Panc1 (cell line): ENCODE measurements at regions of chr3 and their contacts with region 1.

Region 1: GRCh38 chr3:153246806-153247205 is 84.8 kb downstream of the RAP2B start:
- DNase-seq: no peak
- ATAC-seq: no peak
- H3K4me3 ChIP-seq: no peak overlapping the region
- H3K27ac ChIP-seq: no peak overlapping the region
- H3K4me1 ChIP-seq: no peaks in the 10 kb centered on the region
- H3K27me3 ChIP-seq: no peaks in the 10 kb centered on the region
- CTCF ChIP-seq: no peak

Region 2: DNA sequence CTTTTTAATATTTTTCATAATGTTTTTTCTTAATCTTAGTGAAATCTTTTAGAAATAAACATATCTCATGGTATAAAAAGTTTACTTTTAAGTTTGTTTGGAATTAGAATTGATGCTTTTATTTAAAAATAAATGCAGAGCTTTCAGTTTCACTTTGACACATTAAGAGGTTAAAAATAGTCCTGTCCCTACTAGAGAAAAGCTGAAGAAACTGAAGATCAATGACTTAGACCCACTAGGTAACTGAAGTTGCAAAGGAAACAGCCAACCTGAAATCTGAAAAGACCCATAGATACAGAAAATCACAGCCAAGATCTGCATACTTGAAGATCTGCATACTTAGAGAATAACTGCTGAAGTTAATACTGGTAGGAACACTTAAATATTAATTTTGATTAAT is 152.8 kb after region 1 on chr3:
- CTCF ChIA-PET with region 1: no interaction called
- POLR2A ChIA-PET with region 1: no interaction called
- in situ Hi-C with region 1: no loop called
- intact Hi-C with region 1: no loop called
- DNase-seq: no peak
- ATAC-seq: no peak
- H3K4me3 ChIP-seq: no peak overlapping the region
- H3K27ac ChIP-seq: no peak overlapping the region
- H3K4me1 ChIP-seq: no peaks in the 10 kb centered on the region
- H3K27me3 ChIP-seq: no peaks in the 10 kb centered on the region
- CTCF ChIP-seq: no peak

Region 3: GRCh38 chr3:153463895-153464294 is 217.1 kb after region 1 on chr3:
- CTCF ChIA-PET with region 1: interaction called, 12 read pairs
- POLR2A ChIA-PET with region 1: no interaction called
- in situ Hi-C with region 1: no loop called
- intact Hi-C with region 1: no loop called
- DNase-seq: no peak
- ATAC-seq: no peak
- H3K4me3 ChIP-seq: no peak overlapping the region
- H3K27ac ChIP-seq: no peak overlapping the region
- H3K4me1 ChIP-seq: no peaks in the 10 kb centered on the region
- H3K27me3 ChIP-seq: no peaks in the 10 kb centered on the region
- CTCF ChIP-seq: no peak

Region 4: DNA sequence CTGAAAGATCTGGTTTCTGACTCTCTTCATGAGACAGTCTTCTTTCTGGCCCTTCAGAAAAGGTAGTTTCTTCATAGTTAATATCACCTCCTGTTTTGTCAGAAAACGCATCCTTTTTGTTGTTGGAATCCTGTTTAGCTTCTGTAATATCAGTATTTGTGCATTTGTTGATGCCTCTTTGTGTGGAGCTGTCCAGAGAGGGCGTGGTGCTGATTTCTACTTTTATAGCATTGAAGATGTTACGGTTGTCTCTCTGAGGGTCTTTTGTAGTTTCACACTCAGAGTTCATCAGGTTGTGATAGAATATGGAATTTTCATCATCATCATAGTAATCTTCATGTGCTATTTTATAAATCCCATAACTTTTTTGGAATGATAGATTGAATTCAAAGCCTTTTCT is 1174.3 kb after region 1 on chr3:
- CTCF ChIA-PET with region 1: no interaction called
- POLR2A ChIA-PET with region 1: no interaction called
- in situ Hi-C with region 1: no loop called
- intact Hi-C with region 1: no loop called
- DNase-seq: no peak
- ATAC-seq: no peak
- H3K4me3 ChIP-seq: no peak overlapping the region
- H3K27ac ChIP-seq: no peak overlapping the region
- H3K4me1 ChIP-seq: no peaks in the 10 kb centered on the region
- H3K27me3 ChIP-seq: no peaks in the 10 kb centered on the region
- CTCF ChIP-seq: no peak